HEK293T (cell line): ENCODE measurements at regions of chr6 and their contacts with region 1.

Region 1: GRCh38 chr6:36027501-36028087 is at the start of gene MAPK14:
- DNase-seq: peak; percentile 97

Region 2: GRCh38 chr6:36038120-36038876 is 10.7 kb after region 1 on chr6:
- CTCF ChIA-PET with region 1: interaction called, 6 read pairs
- POLR2A ChIA-PET with region 1: interaction called, 12 read pairs
- DNase-seq: no peak

Region 3: GRCh38 chr6:36052097-36052496 is 24.5 kb after region 1 on chr6:
- CTCF ChIA-PET with region 1: no interaction called
- POLR2A ChIA-PET with region 1: interaction called, 11 read pairs
- DNase-seq: no peak

Region 4: DNA sequence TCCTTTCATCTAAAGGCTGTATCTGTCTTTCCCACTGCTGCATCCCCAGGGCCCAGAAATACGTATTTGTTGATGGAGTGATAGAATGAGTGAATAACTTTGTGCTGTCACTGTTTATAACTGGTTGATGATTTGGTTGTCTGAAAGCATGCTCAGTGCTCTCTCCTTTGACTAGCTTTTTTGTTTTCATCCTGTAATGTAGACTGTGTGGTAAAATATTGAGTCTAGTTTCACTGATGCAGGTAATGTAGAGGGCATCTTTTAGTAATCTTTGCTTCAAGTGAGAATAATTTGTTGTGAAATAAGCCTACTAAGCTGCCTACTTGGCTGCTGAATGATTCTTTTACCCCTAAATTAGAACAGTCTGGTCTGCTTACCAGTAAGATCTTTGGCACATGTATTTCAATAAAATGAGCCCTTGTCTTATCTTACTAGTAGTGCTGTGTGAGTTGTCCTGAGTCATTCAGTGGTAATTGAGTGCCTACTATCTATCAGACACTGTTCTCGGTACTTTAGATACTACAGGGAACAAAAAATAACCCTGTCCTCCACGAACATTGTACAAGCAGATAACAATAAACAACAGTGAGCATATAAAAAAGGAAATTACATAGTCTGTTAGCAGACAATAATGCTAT is 39.9 kb after region 1 on chr6:
- CTCF ChIA-PET with region 1: no interaction called
- POLR2A ChIA-PET with region 1: interaction called, 20 read pairs
- DNase-seq: no peak

Region 5: DNA sequence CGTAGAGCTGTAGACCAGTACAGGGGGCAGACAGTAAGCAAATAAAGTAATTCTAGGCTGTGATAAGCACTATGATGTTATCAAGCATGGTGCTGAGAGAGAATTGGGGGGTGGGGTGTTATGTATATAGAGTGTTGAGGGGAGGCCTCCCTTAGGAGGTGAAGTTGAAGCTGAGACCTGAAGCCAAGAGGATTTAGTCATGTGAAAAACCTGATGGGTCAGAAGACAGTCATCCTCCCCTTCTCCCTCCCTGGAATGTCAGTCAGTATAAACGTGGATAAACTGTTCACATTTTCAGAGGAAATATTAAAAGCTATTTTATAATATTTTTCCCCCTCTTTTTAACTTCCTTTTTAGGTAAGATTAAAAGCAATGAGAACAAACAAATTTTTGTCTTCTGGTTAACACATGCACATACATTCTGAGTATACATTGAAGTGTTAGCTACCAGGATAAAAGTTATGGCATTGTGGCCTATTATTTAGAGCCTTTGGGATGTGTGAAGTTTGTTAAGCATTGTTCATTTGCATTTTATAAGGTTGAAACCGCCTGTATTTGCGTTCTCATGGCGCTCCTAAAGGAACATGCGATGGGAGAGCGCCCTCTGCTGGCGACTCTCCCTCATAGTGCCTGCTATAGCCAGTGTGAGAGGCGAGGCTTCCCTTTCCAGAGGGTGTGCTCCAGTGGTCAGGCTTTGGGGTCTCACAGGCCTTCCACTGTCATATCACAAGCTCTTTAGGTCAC is 67.3 kb after region 1 on chr6:
- CTCF ChIA-PET with region 1: interaction called, 23 read pairs
- POLR2A ChIA-PET with region 1: interaction called, 16 read pairs
- DNase-seq: peak; percentile 81

Region 6: DNA sequence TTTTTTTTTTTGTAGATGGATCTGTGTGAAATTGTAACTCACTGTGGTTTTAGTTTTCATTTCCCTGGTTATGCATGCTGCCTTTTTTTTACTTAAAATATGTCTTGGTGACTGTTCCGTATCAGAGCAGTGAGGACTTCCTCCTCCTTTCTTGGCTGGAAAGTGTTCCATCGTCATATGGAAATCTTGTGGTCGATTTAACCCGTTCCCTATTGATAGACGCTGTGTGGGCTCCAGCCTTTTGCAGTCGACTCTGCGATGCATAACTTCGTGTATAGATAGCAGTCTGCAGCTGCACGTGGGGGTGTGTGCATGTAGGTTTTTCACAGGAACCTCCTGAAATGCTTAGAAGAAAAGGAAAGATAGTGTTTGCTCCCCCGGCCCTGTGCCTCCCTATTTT is 214.1 kb after region 1 on chr6:
- CTCF ChIA-PET with region 1: no interaction called
- POLR2A ChIA-PET with region 1: no interaction called
- DNase-seq: no peak

Region 7: DNA sequence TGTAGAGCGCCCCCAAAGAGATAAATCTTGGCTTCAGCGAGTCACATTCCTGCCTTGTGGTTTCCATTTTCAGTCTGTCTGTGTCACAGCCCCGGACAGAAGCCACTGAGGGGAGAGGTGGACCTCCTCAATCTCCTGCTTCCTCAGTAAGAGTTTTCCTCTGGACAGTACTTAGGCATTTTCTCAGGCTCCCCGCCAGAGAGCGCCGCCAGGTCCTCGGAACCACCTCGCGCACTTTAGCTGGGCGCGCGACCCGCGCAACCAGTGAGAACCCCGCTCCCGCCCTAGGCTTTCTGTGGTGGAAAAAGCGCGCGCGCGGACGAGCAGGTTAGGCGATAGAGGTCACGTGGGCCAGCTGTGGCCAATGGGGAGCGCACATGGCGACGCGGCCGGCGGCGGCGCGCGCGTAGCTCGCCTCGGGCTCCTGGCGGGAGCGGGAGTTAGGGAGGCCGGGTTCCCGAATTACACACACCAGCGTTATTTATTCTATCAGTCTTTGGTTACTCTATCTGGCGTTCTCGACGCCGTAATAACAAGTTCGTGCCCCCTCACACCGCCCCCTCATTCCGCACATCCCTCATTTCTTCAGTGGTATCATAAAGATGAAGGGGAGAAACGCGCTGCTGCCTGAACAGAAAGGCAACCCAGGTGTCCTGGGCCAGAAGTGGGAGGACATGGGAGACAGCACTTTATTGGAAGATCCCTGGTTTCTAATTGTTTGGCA is 395.7 kb after region 1 on chr6:
- CTCF ChIA-PET with region 1: no interaction called
- POLR2A ChIA-PET with region 1: no interaction called
- DNase-seq: peak; percentile 95